IMR-90 (cell line): ENCODE measurements at regions of chr6 and their contacts with region 1.

Region 1: GRCh38 chr6:20427856-20428255 is 26.2 kb downstream of the E2F3 start:
- DNase-seq: no peak
- ATAC-seq: no peak
- H3K4me3 ChIP-seq: no peak overlapping the region
- H3K27ac ChIP-seq: no peak overlapping the region
- H3K4me1 ChIP-seq: peaks cover 3% of the 10 kb centered on the region; the same call in 1 of the 2 replicates
- H3K27me3 ChIP-seq: no peaks in the 10 kb centered on the region
- CTCF ChIP-seq: no peak
- POLR2A ChIP-seq: no peak
- RAD21 ChIP-seq: no peak

Region 2: DNA sequence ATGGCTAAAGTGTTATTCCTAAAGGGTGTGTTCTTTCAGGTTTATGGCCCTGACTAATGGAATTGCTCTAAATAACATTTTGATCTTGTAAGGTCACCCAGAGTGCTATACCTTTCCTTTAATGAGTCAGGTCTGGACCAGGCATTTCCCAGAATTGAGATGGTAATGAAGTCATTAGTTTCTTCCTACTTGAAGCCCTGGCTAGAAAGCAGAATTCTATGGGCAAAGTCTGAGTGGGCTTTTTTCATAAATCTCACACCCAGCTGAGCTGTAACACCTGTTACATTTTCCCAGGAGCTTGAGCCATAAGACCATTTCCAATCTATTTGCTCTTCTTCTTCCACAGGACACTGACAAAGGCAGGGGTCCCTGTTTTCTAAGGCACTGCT is 712.7 kb before region 1 on chr6:
- CTCF ChIA-PET with region 1: no interaction called
- POLR2A ChIA-PET with region 1: no interaction called
- dilution Hi-C with region 1: no loop called
- in situ Hi-C with region 1: no loop called
- intact Hi-C with region 1: no loop called
- DNase-seq: no peak
- ATAC-seq: no peak
- H3K4me3 ChIP-seq: no peak overlapping the region
- H3K27ac ChIP-seq: no peak overlapping the region
- H3K4me1 ChIP-seq: peaks cover 3% of the 10 kb centered on the region
- H3K27me3 ChIP-seq: no peaks in the 10 kb centered on the region
- CTCF ChIP-seq: no peak
- POLR2A ChIP-seq: no peak
- RAD21 ChIP-seq: no peak

Region 3: DNA sequence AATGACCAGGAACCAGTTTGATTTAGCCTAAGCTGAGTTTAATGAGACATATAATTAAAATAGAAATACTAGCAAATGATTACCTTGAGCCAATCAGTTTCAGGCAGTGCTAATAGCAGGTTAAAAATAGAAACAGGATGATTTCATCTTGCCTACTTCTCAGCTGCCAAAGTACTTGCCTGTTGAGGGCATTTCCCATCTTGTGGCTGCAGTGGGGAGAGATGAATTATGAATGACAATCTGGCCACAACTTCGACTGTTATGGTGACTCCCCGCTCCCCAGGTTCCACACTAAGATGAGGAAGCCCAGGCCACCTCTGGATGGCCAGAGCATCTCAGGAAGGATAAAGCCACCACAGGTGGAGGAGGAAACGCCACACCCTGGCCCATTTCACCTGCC is 246.9 kb before region 1 on chr6:
- CTCF ChIA-PET with region 1: no interaction called
- POLR2A ChIA-PET with region 1: no interaction called
- dilution Hi-C with region 1: no loop called
- in situ Hi-C with region 1: no loop called
- intact Hi-C with region 1: no loop called
- DNase-seq: no peak
- ATAC-seq: no peak
- H3K4me3 ChIP-seq: no peak overlapping the region
- H3K27ac ChIP-seq: no peak overlapping the region
- H3K4me1 ChIP-seq: no peaks in the 10 kb centered on the region
- H3K27me3 ChIP-seq: no peaks in the 10 kb centered on the region
- CTCF ChIP-seq: no peak
- POLR2A ChIP-seq: no peak
- RAD21 ChIP-seq: no peak

Region 4: GRCh38 chr6:20325641-20326421 is 102.0 kb before region 1 on chr6:
- CTCF ChIA-PET with region 1: no interaction called
- POLR2A ChIA-PET with region 1: no interaction called
- dilution Hi-C with region 1: no loop called
- in situ Hi-C with region 1: no loop called
- intact Hi-C with region 1: no loop called
- DNase-seq: peak; percentile 49
- ATAC-seq: no peak; the same call in 1 of the 2 replicates
- H3K4me3 ChIP-seq: no peak overlapping the region
- H3K27ac ChIP-seq: no peak overlapping the region
- H3K4me1 ChIP-seq: peaks cover 2% of the 10 kb centered on the region; the same call in 1 of the 2 replicates
- H3K27me3 ChIP-seq: peaks cover 8% of the 10 kb centered on the region
- CTCF ChIP-seq: no peak
- POLR2A ChIP-seq: no peak
- RAD21 ChIP-seq: no peak

Region 5: GRCh38 chr6:21070620-21071019 is 642.8 kb after region 1 on chr6:
- CTCF ChIA-PET with region 1: no interaction called
- POLR2A ChIA-PET with region 1: no interaction called
- dilution Hi-C with region 1: no loop called
- in situ Hi-C with region 1: no loop called
- intact Hi-C with region 1: loop called (anchors 5 kb)
- DNase-seq: no peak
- ATAC-seq: no peak
- H3K4me3 ChIP-seq: no peak overlapping the region
- H3K27ac ChIP-seq: no peak overlapping the region
- H3K4me1 ChIP-seq: no peaks in the 10 kb centered on the region
- H3K27me3 ChIP-seq: no peaks in the 10 kb centered on the region
- CTCF ChIP-seq: no peak
- POLR2A ChIP-seq: no peak
- RAD21 ChIP-seq: no peak